Right ventricle myocardium inferior (tissue), 1 donor: ENCODE measurements at regions of chr4 and their contacts with region 1.

Region 1: GRCh38 chr4:10018818-10019461 is 2.4 kb downstream of the SLC2A9 start:
- DNase-seq: peak; percentile 99
- ATAC-seq: peak; percentile 96

Region 2: DNA sequence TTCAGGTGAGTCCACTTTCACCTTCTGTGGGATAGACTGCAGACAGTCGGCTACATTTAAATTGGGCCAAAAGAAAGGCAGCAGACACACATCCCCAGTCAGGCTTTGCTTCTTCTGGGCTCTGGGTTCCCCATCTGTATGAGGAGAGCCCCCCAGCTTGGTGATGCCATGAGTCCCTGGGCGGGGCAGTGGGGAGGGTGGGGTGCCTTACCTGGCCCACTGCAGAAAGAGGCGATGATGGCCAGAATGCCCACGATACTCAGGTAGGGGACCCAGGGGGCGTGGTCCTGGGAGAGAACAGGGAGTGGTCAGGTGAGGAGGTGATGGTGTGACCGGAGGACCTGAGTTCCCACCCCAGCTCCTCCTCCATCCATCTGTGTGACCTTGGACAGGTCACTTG is 131.6 kb before region 1 on chr4:
- intact Hi-C with region 1: no loop called
- DNase-seq: no peak
- ATAC-seq: no peak

Region 3: DNA sequence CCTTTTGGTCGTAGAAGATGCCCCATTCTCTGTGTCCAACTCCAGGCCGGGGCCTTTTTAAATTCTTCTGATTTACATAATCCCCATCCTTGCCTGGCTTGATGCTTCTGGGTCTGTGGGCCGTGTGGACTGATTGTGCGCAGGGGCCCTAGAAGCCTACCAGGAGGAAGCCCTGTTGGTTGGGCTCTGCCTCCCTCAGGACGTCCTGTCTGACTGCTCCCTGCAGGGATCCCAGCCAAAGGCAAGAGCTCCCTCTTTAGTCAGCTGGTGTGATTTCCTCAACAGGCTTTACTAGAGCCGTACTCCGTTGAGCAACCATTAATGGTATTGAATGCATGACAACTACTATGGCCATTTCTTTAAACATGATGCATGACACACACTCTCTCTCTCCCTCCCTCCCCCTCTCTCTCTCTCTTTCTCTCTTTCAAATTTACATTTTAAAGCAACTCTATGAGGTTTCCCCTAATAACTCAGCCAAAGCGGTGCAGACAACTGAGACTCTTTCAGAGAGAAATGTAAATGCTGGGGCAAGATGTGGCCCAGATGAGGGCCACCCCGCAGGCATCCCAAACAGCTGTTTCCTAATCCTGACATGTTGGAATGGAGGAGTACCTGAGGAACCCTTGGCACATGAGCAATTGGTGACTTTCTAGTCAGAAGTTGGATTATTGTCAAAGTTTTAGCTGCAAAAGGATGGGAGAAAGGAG is 120.2 kb before region 1 on chr4:
- intact Hi-C with region 1: loop called (anchors 2 kb)
- DNase-seq: no peak
- ATAC-seq: peak; percentile 85

Region 4: DNA sequence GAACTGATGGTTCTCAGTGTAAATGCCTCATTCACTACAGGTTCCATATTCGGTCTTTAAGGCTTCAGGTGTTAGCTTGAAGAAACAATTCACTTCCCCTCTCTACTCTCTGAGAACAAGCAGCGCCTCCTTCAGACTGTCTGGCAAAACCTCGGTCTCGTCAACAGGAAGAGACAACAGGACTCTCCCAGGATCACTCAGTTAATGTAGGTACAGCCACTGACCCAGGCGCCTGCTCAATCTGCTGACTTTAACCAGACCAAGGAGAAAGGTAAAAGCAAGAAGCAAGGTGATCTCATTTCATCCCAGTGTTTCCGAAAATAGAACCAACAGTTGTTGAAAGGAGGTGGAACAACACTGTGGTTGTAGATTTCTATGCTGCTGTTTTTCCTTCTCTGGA is 99.9 kb before region 1 on chr4:
- intact Hi-C with region 1: loop called (anchors 5 kb)
- DNase-seq: no peak
- ATAC-seq: peak; percentile 17

Region 5: DNA sequence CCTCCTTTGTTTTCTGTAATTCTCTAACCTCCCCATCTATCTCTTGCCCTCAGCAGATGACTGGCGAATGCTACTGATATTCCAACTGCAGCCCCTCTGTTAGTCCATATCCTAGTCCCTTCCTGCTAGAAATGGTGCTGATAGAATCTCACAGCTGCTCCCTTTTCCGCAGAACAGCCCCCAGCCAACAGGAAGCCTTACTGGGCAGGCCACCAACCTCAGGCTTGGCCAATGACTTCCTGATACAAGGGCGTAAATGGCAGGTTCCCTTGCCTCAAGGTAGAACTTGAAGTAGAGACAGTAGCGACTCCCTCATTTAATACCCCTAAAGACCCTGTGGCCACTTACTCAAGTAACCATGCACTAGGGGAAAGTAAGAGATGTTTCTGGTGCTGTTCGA is 29.0 kb after region 1 on chr4:
- intact Hi-C with region 1: loop called (anchors 1 kb)
- DNase-seq: no peak
- ATAC-seq: no peak

Region 6: DNA sequence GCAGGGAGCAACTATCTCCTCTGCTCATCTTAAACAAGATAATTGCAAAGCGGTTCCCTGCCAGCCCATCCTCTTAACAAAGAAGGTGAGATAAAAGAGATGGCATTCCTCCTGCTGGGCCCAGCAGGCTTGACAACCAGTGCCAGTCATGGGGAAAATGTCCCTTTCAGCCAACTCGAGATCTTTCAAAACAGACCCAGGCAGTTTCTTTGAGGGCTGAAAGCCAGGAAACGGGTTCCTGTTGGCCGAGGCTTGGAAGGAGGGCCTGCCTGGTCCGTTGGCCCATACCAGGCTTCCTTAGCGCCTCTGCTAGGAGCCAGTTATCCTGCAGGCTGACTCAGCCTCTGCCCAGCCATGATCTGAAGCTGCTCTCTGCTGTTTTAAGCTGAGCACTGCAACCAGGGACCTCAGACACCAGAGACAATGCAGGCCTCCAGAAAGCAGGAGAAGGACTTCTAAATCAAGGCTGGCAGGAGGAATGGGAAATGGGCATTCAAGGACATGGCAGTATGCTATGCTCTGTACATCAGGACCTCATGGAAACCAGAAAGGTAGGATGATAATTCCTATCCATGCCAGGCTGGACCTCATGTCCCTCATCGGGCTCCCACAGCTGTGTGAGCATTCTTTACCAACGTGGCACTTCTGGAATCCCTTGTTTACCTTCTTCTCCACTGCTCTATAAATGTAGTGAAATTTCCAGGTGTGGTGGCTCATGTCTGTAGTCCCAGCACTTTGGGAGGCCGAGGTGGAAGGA is 44.8 kb after region 1 on chr4:
- intact Hi-C with region 1: loop called (anchors 1 kb)
- DNase-seq: no peak
- ATAC-seq: peak; percentile 93

Region 7: DNA sequence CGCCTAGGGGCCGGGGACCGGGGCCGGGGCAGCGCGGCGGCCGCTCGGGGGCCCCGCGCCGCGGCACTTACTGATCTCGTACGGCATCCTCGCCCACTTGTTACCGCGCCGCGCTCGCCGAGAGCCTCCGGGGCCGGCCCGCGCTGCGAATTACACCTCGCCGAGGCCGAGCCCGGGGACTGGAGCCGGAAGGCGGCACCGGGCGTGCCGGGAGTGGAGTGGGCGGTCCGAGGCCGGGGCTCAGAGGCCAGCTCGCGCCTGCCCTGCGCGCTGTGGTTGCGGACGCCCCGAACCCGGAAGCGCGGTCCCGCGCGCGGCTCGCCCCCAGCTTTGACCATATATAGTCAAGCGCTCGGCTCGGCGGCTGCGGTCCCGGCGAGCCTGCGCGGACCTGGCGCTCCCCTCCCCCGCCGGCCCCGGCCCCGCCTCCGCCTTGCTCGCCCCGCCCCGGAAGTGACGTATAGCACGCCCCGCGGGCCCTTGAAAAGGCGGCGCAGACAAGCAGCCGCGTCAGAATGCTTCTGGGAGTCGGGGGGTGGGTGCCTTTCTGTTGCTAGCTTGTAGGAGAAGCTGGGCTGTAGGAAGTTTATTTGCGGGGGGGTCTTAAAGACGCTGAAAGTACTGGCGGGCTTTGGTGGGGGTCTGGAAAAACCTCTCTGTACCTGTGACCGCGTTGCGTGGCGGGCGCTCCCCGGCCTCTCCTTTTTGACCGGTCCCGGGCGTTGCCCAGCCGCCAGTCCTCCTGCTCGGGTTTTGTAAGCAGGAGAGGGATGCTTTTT is 97.8 kb after region 1 on chr4 and contains the start of gene WDR1:
- intact Hi-C with region 1: loop called (anchors 2 kb)
- DNase-seq: peak; percentile 99
- ATAC-seq: peak; percentile 99
- total RNA-seq, gene WDR1: 210 TPM